ENCODE measurements at regions of chr1 and their contacts with region 1.

Region 1: DNA sequence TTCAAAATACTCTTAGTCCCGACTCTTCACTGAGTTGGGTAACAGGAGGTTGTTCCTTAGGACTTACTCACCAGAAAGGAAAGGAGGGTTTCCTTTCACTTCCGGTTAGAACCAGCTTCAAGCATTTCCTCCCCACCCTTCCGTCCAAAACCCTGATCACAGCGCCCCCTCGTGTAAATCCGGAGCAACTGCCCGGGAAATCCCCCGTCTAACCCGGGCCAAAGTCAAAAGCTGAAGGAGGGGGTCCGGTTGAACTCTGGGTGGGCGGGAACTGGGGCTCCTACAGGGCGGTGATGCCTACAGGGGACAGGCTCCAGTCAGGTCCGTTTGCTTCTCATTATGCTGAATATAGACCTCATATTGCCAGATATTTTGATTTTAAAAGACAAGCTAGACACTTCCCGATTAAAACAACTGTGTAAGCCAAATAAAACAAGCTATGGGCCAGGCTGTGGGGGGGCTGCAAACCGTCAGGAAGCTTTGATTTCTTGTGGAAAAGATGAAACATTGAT is 15.0 kb upstream of the MTARC2 start:
- H3K4me3 Mint-ChIP-seq: no peak overlapping the region
- H3K27ac Mint-ChIP-seq: peak overlapping the region; percentile 29
- H3K4me1 Mint-ChIP-seq: peaks cover 20% of the 10 kb centered on the region
- H3K27me3 Mint-ChIP-seq: peaks cover 7% of the 10 kb centered on the region

Region 2: DNA sequence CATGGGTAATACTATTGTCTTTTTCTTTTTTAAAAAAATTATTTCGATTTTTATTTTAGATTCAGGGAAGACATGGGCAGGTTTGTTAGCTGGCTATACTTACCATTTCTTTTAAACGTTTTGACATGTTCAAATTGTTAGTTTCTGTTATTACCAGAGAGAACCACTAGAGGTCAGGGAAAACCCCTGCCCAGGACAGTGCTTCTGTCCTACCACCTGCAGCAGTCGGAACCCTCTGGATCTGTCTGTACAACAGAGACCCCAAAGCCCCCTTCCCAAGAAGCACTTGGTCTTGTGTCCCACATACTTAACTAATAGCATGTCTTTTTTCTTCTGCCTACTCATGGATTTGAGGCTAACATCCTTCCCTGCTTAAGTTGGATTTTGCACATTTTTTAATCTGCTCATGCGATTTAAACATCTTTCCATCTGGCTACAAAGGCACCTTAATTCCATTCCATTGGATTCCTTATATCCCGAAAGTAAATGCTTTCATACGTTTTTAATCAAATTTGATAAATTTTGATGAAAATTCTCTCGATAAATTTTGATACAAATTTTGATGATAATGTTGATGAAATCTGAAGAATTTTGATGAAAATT is 53.0 kb before region 1 on chr1:
- intact Hi-C with region 1: loop called (anchors 2 kb)
- H3K4me3 Mint-ChIP-seq: no peak overlapping the region
- H3K27ac Mint-ChIP-seq: no peak overlapping the region
- H3K4me1 Mint-ChIP-seq: no peaks in the 10 kb centered on the region
- H3K27me3 Mint-ChIP-seq: peaks cover 3% of the 10 kb centered on the region

Region 3: DNA sequence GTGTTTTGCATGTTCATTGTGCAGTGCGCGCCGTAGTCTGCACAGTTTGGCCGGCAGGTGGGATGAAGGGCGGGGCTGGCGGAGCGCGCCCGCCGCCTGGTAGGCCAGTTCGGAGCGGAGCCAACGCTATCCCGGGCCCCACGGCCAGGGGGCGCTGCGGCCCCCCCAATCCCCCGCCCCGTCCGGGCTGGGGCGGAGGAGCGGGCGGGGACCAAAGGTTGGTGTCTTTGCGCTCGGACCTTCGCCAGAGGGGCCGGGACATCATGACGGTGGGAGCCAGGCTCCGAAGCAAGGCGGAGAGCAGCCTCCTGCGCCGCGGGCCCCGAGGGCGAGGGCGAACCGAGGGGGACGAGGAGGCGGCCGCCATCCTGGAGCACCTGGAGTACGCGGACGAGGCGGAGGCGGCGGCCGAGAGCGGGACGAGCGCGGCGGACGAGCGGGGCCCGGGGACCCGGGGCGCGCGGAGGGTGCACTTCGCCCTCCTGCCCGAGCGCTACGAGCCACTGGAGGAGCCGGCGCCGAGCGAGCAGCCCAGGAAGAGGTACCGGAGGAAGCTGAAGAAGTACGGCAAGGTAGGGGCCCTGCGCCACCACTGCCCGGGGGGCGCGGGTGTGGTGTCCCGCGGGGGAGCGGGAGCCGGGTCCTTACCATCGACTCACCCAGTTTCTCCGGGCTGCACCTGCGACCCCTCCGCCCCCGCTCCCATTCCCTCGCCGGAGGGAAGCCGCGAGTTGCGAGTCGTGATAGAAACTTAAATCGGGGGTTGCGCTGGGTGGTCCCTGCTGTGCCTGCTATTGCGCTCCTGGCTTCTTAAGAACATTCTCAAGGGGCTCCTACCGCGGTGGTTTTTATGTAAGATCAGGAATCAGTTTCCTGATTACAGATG is 42.8 kb before region 1 on chr1 and contains the start of gene C1orf115:
- intact Hi-C with region 1: loop called (anchors 2 kb)
- H3K4me3 Mint-ChIP-seq: peak within 1 kb of the TSS; percentile 91
- H3K27ac Mint-ChIP-seq: peak within 1 kb of the TSS; percentile 68
- H3K4me1 Mint-ChIP-seq: peaks cover 9% of the 10 kb centered on the region
- H3K27me3 Mint-ChIP-seq: peaks cover 30% of the 10 kb centered on the region